K562 (cell line): ENCODE measurements at regions of chr7 and their contacts with region 1.

Region 1: GRCh38 chr7:127803626-127804025 is 151.6 kb downstream of the SND1 start:
- DNase-seq: peak in 3 of 4 experiments; percentile 24 to 50 (median 47)
- ATAC-seq: no peak
- H3K4me3 ChIP-seq: no peak overlapping the region
- H3K27ac ChIP-seq: no peak overlapping the region
- H3K4me1 ChIP-seq: peaks cover 5 to 12% of the 10 kb centered on the region in 2 experiments; a peak in 3 of 5 replicates
- H3K27me3 ChIP-seq: no peaks in the 10 kb centered on the region
- CTCF ChIP-seq: no peak
- EP300 ChIP-seq: no peak
- POLR2A ChIP-seq: no peak
- RAD21 ChIP-seq: peak in 1 of 2 experiments; percentile 35; a peak in 2 of 4 replicates

Region 2: DNA sequence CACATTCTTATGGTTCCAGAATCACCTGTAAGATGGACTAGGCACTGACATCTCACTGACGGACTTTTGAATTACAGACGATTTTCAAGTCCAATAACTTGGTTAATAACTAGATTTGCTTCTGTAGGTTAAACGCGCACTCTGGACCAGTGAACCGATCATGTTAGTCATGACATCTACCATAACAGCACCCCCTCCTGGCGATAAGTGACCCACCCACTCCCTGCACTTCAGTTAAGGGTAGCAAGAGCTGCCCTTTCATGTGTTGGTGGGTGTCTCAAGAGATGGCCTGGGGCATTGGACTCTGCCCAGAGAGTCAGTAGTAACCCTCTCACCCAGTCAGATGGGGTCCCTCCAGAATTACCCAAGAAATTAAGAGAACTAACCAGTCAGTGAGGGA is 563.8 kb before region 1 on chr7:
- CTCF ChIA-PET with region 1: no interaction called
- POLR2A ChIA-PET with region 1: no interaction called
- in situ Hi-C with region 1: no loop called
- intact Hi-C with region 1: no loop called
- DNase-seq: peak; percentile 47 to 49 (median 48)
- ATAC-seq: peak; percentile 94
- H3K4me3 ChIP-seq: no peak overlapping the region
- H3K27ac ChIP-seq: no peak overlapping the region
- H3K4me1 ChIP-seq: no peaks in the 10 kb centered on the region
- H3K27me3 ChIP-seq: peaks cover 2 to 7% of the 10 kb centered on the region in 2 experiments; a peak in 2 of 5 replicates
- CTCF ChIP-seq: peak; percentile 49 to 75 (median 54)
- EP300 ChIP-seq: no peak
- POLR2A ChIP-seq: no peak
- RAD21 ChIP-seq: peak in 1 of 2 experiments; percentile 37; a peak in 2 of 4 replicates

Region 3: GRCh38 chr7:127813991-127814541 is 10.4 kb after region 1 on chr7:
- CTCF ChIA-PET with region 1: no interaction called
- POLR2A ChIA-PET with region 1: interaction called, 10 read pairs
- in situ Hi-C with region 1: no loop called
- intact Hi-C with region 1: no loop called
- DNase-seq: no peak
- ATAC-seq: no peak
- H3K4me3 ChIP-seq: no peak overlapping the region
- H3K27ac ChIP-seq: no peak overlapping the region
- H3K4me1 ChIP-seq: peaks cover 4 to 23% of the 10 kb centered on the region in 2 experiments; a peak in 4 of 5 replicates
- H3K27me3 ChIP-seq: no peaks in the 10 kb centered on the region
- CTCF ChIP-seq: no peak
- EP300 ChIP-seq: no peak
- POLR2A ChIP-seq: no peak
- RAD21 ChIP-seq: no peak